Panc1 (cell line): ENCODE measurements at regions of chr5 and their contacts with region 1.

Region 1: DNA sequence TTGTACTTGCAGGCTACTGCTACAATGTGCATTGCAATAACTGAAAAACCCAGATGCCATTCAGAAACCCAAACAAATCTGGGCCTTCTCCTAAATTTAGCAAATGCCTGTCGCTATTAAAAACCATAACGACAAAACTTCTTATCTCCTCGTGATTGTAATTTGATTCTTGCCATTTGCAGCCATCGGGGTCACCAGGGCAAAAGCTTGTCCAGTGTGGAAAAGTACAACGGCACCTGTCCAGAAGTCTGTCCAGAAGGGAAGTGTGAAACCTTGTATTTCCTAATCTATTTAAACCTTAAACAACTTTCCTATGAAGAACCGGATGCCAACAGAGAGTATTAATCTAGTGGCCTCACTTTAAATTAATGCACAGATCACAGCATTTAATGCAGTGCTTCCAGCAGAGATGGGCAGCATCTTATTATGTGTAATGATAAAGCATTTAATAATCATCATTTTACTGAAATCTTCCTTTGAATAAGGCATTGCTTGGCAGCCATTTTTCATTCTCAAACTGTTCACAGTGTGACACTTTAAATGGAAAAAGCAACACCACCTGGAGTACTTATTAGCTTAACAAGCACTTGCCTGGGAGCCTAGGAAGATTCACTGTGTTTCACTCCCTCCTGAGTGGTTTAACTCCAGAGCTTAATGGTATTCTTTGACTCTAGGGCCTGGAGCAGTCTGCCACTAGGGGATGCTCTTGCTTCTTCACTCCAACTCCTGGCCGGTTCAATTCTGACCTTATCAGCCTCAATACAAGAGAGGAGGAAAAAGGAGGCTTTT is 4.9 kb upstream of the C7 start:
- DNase-seq: peak; percentile 75
- ATAC-seq: peak; percentile 99
- H3K4me3 ChIP-seq: no peak overlapping the region
- H3K27ac ChIP-seq: no peak overlapping the region
- H3K4me1 ChIP-seq: no peaks in the 10 kb centered on the region
- H3K27me3 ChIP-seq: no peaks in the 10 kb centered on the region
- CTCF ChIP-seq: peak; percentile 99

Region 2: DNA sequence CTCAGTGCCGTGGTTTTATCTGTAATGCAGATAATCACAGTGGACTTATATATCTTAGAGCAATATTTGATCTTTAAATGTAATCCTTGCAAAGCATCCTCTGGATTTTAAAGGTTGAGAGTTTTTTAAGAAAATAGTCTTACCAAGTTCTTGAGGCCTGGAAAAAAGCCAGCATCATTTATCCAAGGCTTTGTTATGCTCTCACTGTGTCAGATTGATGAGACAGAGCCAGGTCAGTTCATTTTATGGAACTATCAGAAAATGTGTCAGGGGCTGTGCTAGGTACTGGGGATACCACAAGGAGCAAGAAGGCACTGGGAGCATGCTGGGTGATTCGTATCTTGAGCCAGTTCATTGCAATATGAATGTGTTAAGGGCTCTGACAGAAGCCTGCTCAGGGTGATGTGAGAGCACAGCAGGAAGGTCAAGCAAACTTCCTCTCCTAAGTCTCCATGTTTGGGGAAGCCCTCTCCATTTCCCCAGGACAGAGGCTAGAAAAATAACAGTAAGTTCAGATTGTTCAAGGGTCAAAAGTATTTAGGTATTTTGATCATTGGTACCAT is 24.6 kb after region 1 on chr5:
- CTCF ChIA-PET with region 1: no interaction called
- POLR2A ChIA-PET with region 1: no interaction called
- in situ Hi-C with region 1: no loop called
- intact Hi-C with region 1: no loop called
- DNase-seq: no peak
- ATAC-seq: no peak
- H3K4me3 ChIP-seq: no peak overlapping the region
- H3K27ac ChIP-seq: no peak overlapping the region
- H3K4me1 ChIP-seq: no peaks in the 10 kb centered on the region
- H3K27me3 ChIP-seq: no peaks in the 10 kb centered on the region
- CTCF ChIP-seq: no peak

Region 3: GRCh38 chr5:41346609-41347008 is 442.2 kb after region 1 on chr5:
- CTCF ChIA-PET with region 1: no interaction called
- POLR2A ChIA-PET with region 1: no interaction called
- in situ Hi-C with region 1: no loop called
- intact Hi-C with region 1: loop called (anchors 10 kb)
- DNase-seq: no peak
- ATAC-seq: no peak
- H3K4me3 ChIP-seq: no peak overlapping the region
- H3K27ac ChIP-seq: no peak overlapping the region
- H3K4me1 ChIP-seq: no peaks in the 10 kb centered on the region
- H3K27me3 ChIP-seq: no peaks in the 10 kb centered on the region
- CTCF ChIP-seq: no peak

Region 4: DNA sequence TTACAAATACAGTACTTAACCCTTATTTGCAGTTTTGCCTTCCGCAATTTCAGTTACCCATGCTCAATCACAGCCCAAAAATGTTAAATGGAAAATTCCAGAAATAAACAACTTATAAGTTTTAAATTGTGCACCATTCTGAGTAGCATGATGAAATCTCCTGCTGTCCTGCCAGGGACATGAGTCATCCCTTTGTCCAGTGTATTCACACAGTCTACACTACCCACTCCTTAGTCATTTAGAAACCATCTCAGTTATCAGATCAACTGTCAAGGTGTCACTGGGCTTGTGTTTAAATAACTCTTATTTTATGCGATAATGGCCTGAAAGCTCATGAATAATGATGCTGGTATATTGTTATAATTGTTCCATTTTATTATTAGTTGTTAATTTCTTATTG is 510.2 kb after region 1 on chr5:
- CTCF ChIA-PET with region 1: no interaction called
- POLR2A ChIA-PET with region 1: no interaction called
- in situ Hi-C with region 1: no loop called
- intact Hi-C with region 1: loop called (anchors 10 kb)
- DNase-seq: peak; percentile 63
- ATAC-seq: peak; percentile 78
- H3K4me3 ChIP-seq: no peak overlapping the region
- H3K27ac ChIP-seq: no peak overlapping the region
- H3K4me1 ChIP-seq: no peaks in the 10 kb centered on the region
- H3K27me3 ChIP-seq: no peaks in the 10 kb centered on the region
- CTCF ChIP-seq: no peak

Region 5: GRCh38 chr5:41641621-41642020 is 737.2 kb after region 1 on chr5:
- CTCF ChIA-PET with region 1: interaction called, 3 read pairs
- POLR2A ChIA-PET with region 1: no interaction called
- in situ Hi-C with region 1: no loop called
- intact Hi-C with region 1: loop called (anchors 10 kb)
- DNase-seq: no peak
- ATAC-seq: no peak
- H3K4me3 ChIP-seq: no peak overlapping the region
- H3K27ac ChIP-seq: no peak overlapping the region
- H3K4me1 ChIP-seq: no peaks in the 10 kb centered on the region
- H3K27me3 ChIP-seq: no peaks in the 10 kb centered on the region
- CTCF ChIP-seq: no peak

Region 6: GRCh38 chr5:41843456-41844370 is 939.3 kb after region 1 on chr5:
- CTCF ChIA-PET with region 1: interaction called, 4 read pairs
- POLR2A ChIA-PET with region 1: no interaction called
- in situ Hi-C with region 1: no loop called
- intact Hi-C with region 1: loop called (anchors 5 kb)
- DNase-seq: no peak
- ATAC-seq: peak; percentile 68
- H3K4me3 ChIP-seq: no peak overlapping the region
- H3K27ac ChIP-seq: no peak overlapping the region
- H3K4me1 ChIP-seq: no peaks in the 10 kb centered on the region
- H3K27me3 ChIP-seq: no peaks in the 10 kb centered on the region
- CTCF ChIP-seq: peak; percentile 75; the same call in 1 of the 2 replicates